ENCODE measurements at regions of chr10 and their contacts with region 1.

Region 1: DNA sequence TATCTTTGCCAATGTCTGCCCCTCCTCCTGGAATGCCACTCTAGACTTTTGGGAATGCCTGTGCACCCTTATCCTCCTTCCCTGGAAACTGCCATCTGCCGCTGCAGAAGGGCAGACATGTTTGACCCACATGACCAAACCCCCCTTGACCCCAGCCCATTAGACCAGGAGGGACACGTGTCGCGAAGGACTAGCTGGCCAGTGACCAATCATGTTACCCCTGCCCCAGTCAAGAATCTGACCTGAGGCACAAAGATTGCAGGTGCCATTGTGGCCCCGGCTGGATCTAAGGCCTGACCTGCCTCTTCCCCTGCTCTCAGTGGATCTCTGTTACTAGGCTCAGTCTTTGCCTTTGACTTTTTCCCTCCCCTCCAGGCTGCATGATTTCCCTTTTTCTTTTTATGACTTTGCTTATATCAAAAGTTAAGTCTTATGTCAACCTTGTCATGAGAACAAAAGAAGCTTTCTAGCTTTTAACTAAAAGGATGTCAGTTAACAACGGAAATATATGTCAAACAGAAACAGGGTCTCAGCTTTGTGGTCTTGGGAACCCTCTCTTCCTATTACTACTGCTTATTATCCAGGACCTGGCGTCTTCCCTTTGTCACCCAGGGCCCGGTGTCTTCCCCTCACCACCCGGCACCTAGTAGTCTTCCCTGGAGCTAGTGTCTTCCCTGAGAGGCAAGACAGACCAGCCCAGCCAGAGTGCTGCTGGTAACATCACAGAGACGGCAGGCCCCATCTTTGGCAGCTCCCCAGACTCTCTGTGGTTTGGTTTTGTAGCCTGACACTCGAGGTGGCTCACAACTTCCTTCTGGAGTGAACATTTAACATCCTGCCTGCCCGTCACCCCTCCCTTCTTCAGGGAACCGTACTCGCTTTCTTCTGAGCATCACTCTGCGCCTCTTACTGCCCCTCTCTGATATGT is 24.4 kb upstream of the PPIF start:
- DNase-seq: peak; percentile 85 to 94 (median 88)
- H3K4me3 ChIP-seq: peak overlapping the region; percentile 8 to 41
- H3K4me3 Mint-ChIP-seq: peak overlapping the region; percentile 41 to 91 (median 85)
- H3K27ac ChIP-seq: peak overlapping the region; percentile 37
- H3K27ac Mint-ChIP-seq: peak overlapping the region; percentile 92 to 98 (median 96)
- H3K4me1 ChIP-seq: peaks cover 88% of the 10 kb centered on the region
- H3K4me1 Mint-ChIP-seq: peaks cover 58 to 68% (median 65%) of the 10 kb centered on the region in 4 donors
- H3K27me3 ChIP-seq: no peaks in the 10 kb centered on the region
- H3K27me3 Mint-ChIP-seq: no peaks in the 10 kb centered on the region

Region 2: DNA sequence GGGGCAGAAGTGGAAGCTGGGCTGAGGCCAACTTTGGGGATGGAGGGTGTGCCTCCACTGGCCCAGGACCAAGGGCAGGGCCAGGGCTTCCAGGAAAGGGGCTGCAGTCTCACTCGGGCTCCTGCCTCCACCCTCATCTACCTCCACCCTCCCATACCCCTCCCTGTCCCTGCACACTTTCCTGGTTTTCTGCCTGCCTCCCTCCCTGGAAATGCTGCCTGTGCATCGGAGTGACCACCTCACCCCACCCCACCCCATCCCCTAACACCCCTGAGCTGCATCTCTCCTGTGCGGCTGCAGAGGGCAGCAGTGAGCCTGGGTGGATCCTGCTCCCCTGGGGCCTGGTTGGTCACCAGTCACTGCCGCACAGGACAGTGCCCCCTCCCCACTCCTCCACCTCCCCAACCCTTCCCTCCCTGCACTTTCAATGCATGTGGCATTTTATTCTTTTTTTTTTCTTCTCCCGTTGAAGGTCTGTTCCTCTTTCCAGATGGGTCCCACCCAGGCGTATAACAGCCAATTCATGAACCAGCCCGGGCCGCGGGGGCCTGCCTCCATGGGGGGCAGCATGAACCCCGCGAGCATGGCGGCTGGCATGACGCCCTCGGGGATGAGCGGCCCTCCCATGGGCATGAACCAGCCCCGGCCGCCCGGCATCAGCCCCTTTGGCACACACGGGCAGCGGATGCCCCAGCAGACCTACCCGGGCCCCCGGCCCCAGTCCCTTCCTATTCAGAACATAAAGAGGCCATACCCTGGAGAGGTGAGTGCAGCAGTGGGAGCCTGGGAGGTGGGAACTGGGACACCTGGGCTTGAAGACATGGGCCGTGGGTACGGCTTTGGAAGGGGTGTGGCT is 29.8 kb before region 1 on chr10:
- CTCF ChIA-PET with region 1: interaction called, 3 read pairs
- POLR2A ChIA-PET with region 1: interaction called, 21 read pairs
- intact Hi-C with region 1: loop called (anchors 1 kb)
- DNase-seq: peak in 2 of 5 donors; percentile 10 to 17
- H3K4me3 ChIP-seq: no peak overlapping the region
- H3K4me3 Mint-ChIP-seq: no peak overlapping the region
- H3K27ac ChIP-seq: no peak overlapping the region
- H3K27ac Mint-ChIP-seq: peak overlapping the region in 1 of 7 donors; percentile 24
- H3K4me1 ChIP-seq: no peaks in the 10 kb centered on the region
- H3K4me1 Mint-ChIP-seq: peaks cover 0 to 10% (median 4%) of the 10 kb centered on the region in 4 donors
- H3K27me3 ChIP-seq: no peaks in the 10 kb centered on the region
- H3K27me3 Mint-ChIP-seq: no peaks in the 10 kb centered on the region

Region 3: DNA sequence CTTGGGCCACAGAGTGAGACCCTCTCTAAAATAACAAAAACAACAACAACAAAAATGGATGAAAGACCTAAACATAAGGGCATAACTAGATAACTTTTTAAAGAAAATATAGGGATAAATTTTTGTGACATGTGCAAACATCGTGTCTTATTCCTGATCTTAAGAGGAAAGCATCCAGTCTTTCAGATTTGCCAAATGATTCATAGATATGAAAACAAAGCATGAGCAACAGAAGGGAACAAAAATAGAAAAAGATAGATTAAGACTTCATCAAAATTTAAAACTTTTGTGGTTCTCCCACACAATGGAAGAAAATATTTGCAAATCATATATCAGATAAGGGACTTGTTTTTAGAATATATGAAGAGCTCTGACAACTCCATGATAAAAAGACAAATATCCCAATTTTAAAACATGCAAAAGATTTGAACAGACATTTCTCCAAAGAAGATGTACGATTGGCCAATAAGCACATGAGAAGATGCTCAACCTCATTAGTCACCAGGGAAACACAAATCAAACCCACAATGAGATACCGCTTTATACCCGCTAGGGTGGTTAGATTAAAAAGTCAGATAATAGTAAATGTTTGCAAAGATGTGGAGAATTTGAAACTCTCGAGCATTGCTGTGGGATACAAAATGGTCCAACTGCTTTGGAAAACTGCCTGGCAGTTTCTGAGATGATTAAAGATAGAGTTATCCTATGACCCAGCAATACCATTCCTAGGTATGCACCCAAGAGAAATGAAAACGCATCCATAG is 44.7 kb after region 1 on chr10:
- CTCF ChIA-PET with region 1: no interaction called
- POLR2A ChIA-PET with region 1: no interaction called
- intact Hi-C with region 1: no loop called
- DNase-seq: peak in 1 of 5 donors; percentile 20
- H3K4me3 ChIP-seq: no peak overlapping the region
- H3K4me3 Mint-ChIP-seq: no peak overlapping the region
- H3K27ac ChIP-seq: no peak overlapping the region
- H3K27ac Mint-ChIP-seq: no peak overlapping the region
- H3K4me1 ChIP-seq: no peaks in the 10 kb centered on the region
- H3K4me1 Mint-ChIP-seq: peaks cover 0 to 5% (median 2%) of the 10 kb centered on the region in 4 donors
- H3K27me3 ChIP-seq: no peaks in the 10 kb centered on the region
- H3K27me3 Mint-ChIP-seq: peaks cover 0 to 3% of the 10 kb centered on the region in 2 donors

Region 4: GRCh38 chr10:80413271-80413996 is 1090.6 kb after region 1 on chr10:
- CTCF ChIA-PET with region 1: no interaction called
- POLR2A ChIA-PET with region 1: no interaction called
- intact Hi-C with region 1: no loop called
- DNase-seq: no peak
- H3K4me3 ChIP-seq: no peak overlapping the region
- H3K4me3 Mint-ChIP-seq: no peak overlapping the region
- H3K27ac ChIP-seq: no peak overlapping the region
- H3K27ac Mint-ChIP-seq: peak overlapping the region in 1 of 7 donors; percentile 41
- H3K4me1 ChIP-seq: peaks cover 4% of the 10 kb centered on the region
- H3K4me1 Mint-ChIP-seq: peaks cover 0 to 4% (median 2%) of the 10 kb centered on the region in 4 donors
- H3K27me3 ChIP-seq: no peaks in the 10 kb centered on the region
- H3K27me3 Mint-ChIP-seq: no peaks in the 10 kb centered on the region